Activated CD8-positive, alpha-beta T cell treated with anti-CD3 and anti-CD28 coated beads, Interleukin-2, amount 10 ng/mL, durations not matched to agents 7 days and 5 days (primary cell): ENCODE measurements at regions of chr9 and their contacts with region 1.

Region 1: GRCh38 chr9:5450359-5451091 is at the start of gene CD274:
- DNase-seq: peak; percentile 84
- ATAC-seq: peak; percentile 98
- H3K4me3 Mint-ChIP-seq: peak within 1 kb of the TSS; percentile 82
- H3K27ac Mint-ChIP-seq: peak within 1 kb of the TSS; percentile 89
- H3K4me1 Mint-ChIP-seq: peaks cover 69% of the 10 kb centered on the region
- H3K27me3 Mint-ChIP-seq: no peaks in the 10 kb centered on the region
- total RNA-seq, gene CD274: 4.0 to 4.9 TPM

Region 2: DNA sequence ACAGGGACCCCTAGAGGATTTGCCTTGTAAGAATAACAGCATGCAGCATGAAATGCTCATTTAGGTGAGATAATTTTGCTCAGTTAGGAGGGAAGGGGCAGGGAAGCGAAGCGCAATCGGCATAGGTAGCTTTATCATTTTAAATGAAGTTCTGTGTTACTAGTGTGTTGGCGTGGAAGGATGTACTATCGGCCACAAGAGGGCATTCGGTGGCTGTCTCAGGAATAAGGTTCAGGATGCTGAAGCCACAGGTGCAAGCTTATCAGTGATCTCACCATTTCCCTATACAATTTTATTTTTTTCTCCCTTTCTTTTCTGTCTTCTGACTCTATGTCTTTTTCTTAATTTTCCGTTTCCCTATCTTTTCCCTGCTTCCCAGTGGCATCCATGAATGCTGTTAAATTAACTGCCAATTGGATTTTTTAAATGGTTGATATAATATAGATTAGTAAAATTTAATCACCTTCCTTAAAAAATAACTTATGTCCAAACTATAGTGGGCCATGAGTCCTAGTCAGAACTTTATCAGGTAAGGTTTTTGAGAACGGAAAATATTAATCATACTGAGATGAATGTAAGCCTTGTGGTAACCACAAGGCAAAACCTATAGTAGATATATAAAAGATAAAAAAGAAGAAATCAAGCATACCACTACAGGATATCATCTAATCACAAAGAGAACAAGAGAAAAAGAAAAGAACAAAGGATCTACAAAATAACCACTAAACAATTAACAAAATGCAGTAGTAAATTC is 263.9 kb before region 1 on chr9:
- CTCF ChIA-PET with region 1: interaction called, 10 read pairs
- POLR2A ChIA-PET with region 1: no interaction called
- DNase-seq: peak; percentile 77
- ATAC-seq: peak; percentile 87
- H3K4me3 Mint-ChIP-seq: no peak overlapping the region
- H3K27ac Mint-ChIP-seq: no peak overlapping the region
- H3K4me1 Mint-ChIP-seq: peaks cover 12% of the 10 kb centered on the region
- H3K27me3 Mint-ChIP-seq: no peaks in the 10 kb centered on the region

Region 3: DNA sequence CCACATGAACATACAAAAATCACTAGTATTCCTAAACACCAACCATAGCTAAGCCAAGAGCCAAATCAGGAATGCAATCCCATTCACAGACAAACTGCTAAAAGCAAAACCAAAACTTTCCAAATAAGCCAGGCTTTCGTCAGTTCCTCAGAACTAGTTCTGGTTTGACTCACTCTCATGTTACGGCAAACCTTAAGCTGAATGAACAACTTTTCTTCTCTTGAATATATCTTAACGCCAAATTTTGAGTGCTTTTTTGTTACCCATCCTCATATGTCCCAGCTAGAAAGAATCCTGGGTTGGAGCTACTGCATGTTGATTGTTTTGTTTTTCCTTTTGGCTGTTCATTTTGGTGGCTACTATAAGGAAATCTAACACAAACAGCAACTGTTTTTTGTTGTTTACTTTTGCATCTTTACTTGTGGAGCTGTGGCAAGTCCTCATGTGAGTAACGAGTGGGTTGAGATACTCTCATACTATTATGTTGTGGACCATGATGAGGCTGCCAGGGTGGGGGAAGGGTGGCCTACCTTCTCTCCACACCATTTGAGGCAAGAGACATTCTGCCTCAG is 59.9 kb after region 1 on chr9 and contains the start of gene PDCD1LG2:
- CTCF ChIA-PET with region 1: interaction called, 15 read pairs
- POLR2A ChIA-PET with region 1: interaction called, 6 read pairs
- DNase-seq: peak; percentile 35
- ATAC-seq: peak; percentile 68
- H3K4me3 Mint-ChIP-seq: peak within 1 kb of the TSS; percentile 68
- H3K27ac Mint-ChIP-seq: peak within 1 kb of the TSS; percentile 87
- H3K4me1 Mint-ChIP-seq: peaks cover 40% of the 10 kb centered on the region
- H3K27me3 Mint-ChIP-seq: no peaks in the 10 kb centered on the region
- total RNA-seq, gene PDCD1LG2: 0.55 TPM

Region 4: GRCh38 chr9:5582835-5583195 is 132.3 kb after region 1 on chr9:
- CTCF ChIA-PET with region 1: interaction called, 127 read pairs
- POLR2A ChIA-PET with region 1: interaction called, 16 read pairs
- DNase-seq: peak; percentile 50
- ATAC-seq: peak; percentile 74
- H3K4me3 Mint-ChIP-seq: no peak overlapping the region
- H3K27ac Mint-ChIP-seq: no peak overlapping the region
- H3K4me1 Mint-ChIP-seq: peaks cover 40% of the 10 kb centered on the region
- H3K27me3 Mint-ChIP-seq: no peaks in the 10 kb centered on the region

Region 5: GRCh38 chr9:5617749-5618148 is 167.2 kb after region 1 on chr9:
- CTCF ChIA-PET with region 1: no interaction called
- POLR2A ChIA-PET with region 1: no interaction called
- DNase-seq: no peak
- ATAC-seq: no peak
- H3K4me3 Mint-ChIP-seq: no peak overlapping the region
- H3K27ac Mint-ChIP-seq: peak overlapping the region; percentile 10
- H3K4me1 Mint-ChIP-seq: peaks cover 19% of the 10 kb centered on the region
- H3K27me3 Mint-ChIP-seq: no peaks in the 10 kb centered on the region

Region 6: DNA sequence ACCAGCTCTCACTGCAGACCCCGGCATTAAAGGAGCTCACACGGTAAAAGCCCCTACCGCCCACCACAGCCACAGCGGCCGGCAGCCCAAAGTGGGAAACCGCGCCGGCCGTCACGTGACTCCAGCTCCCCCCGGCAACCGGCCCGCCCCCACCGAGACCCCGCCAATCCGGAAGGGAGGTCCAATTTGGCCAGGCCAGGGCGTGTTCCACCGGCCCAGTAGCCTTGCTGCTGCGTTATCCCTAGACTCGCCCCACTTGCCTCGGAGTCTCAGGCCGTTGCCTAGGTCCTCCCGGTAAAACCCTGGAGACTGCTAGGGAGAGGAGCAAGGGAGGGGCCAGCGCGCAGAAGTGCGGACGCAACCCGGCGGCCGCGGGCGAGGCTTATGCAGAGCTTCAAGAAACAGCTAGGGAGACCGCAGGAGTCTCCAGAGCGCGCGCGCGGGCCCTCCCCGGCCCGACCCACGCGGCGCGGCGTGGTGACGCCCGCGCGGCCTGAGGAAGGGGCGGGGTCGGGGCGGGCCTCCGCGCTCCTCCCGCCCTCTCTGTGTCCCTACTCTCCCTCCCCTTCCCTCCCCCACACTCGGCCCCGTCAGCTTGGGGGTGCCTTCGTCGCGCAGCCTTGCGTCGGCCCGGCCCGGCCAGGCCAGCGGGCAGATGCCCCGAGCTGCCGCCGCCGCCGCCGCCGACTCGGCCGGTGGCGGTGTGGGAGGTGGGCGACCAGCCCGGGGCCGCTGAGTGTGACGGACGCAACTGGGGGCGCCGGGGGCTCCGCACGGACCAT is 178.2 kb after region 1 on chr9 and contains the start of gene RIC1:
- CTCF ChIA-PET with region 1: interaction called, 12 read pairs
- POLR2A ChIA-PET with region 1: interaction called, 14 read pairs
- DNase-seq: peak; percentile 94
- ATAC-seq: peak; percentile 87
- H3K4me3 Mint-ChIP-seq: peak within 1 kb of the TSS; percentile 100
- H3K27ac Mint-ChIP-seq: peak within 1 kb of the TSS; percentile 97
- H3K4me1 Mint-ChIP-seq: peaks cover 49% of the 10 kb centered on the region
- H3K27me3 Mint-ChIP-seq: no peaks in the 10 kb centered on the region
- total RNA-seq, gene RIC1: 16.7 to 17.8 TPM